ENCODE measurements at regions of chr5 and their contacts with region 1.

Region 1: DNA sequence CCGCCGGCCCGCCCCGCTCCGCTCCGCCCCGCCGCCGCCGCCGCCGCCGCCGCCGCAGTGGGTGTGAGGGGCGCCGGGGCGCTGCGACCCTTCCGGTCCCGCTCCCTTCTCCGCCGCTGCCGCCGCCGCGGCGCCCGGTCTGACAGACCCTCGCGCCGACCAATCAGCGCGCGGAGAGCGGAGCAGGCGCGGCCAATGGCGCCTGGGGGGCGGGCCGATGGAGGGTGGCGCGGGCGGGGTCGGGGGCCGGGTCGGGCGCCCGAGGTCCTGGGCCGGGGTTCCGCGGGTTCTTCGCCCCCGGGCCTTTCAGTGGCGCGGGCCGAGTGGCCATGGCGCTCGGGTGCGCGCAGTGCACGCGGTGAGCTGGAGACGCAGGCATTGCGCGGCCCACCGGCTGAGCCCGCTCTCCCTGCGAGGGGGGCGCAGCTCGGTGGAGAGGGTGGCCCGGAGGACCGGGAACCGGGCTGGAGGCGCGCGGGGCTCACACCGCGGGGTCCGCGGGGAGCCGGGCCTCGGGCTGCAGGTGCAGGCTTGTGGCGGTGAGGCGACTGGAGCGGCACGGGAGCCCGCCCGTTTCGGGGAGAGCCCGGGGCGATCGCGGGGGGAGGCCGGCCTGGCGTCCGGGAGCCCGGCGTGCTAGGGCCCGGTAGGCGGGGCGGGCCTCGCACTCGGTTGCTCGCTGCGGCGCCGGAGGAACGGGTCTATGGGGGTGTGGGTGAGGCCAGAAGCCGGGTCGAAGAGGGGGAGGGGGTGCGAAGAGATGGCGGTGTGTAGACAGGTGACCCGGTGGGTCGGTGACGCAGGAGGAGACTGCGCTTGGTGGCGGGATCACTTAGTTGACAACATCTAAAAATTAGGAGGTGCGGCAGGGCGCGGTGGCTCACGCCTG is at the start of gene MAPK9:
- DNase-seq: peak; percentile 43
- ATAC-seq: peak; percentile 81
- H3K4me3 ChIP-seq: peak within 1 kb of the TSS; percentile 71 to 79
- H3K27ac ChIP-seq: peak within 1 kb of the TSS; percentile 93
- H3K4me1 ChIP-seq: peaks cover 10 to 24% of the 10 kb centered on the region in 2 experiments
- H3K27me3 ChIP-seq: no peaks in the 10 kb centered on the region
- CTCF ChIP-seq: no peak
- POLR2A ChIP-seq: peak; percentile 45
- RAD21 ChIP-seq: no peak
- total RNA-seq, gene MAPK9: 43.4 TPM

Region 2: GRCh38 chr5:180315762-180316212 is 23.6 kb after region 1 on chr5:
- CTCF ChIA-PET with region 1: interaction called, 28 read pairs
- POLR2A ChIA-PET with region 1: no interaction called
- RAD21 ChIA-PET with region 1: interaction called in 1 of 2 experiments, 7 read pairs
- intact Hi-C with region 1: loop called (anchors 1 kb)
- DNase-seq: peak; percentile 19
- ATAC-seq: peak; percentile 87
- H3K4me3 ChIP-seq: no peak overlapping the region
- H3K27ac ChIP-seq: no peak overlapping the region
- H3K4me1 ChIP-seq: no peaks in the 10 kb centered on the region
- H3K27me3 ChIP-seq: no peaks in the 10 kb centered on the region
- CTCF ChIP-seq: peak; percentile 89 to 100 (median 98)
- POLR2A ChIP-seq: no peak
- RAD21 ChIP-seq: peak; percentile 65

Region 3: GRCh38 chr5:180328296-180329137 is 36.3 kb after region 1 on chr5:
- CTCF ChIA-PET with region 1: interaction called, 28 read pairs
- POLR2A ChIA-PET with region 1: interaction called, 5 read pairs
- RAD21 ChIA-PET with region 1: interaction called, 5 to 7 read pairs
- intact Hi-C with region 1: loop called (anchors 1 kb)
- DNase-seq: peak; percentile 74
- ATAC-seq: peak; percentile 90
- H3K4me3 ChIP-seq: no peak overlapping the region
- H3K27ac ChIP-seq: no peak overlapping the region
- H3K4me1 ChIP-seq: peaks cover 33 to 45% of the 10 kb centered on the region in 2 experiments
- H3K27me3 ChIP-seq: no peaks in the 10 kb centered on the region
- CTCF ChIP-seq: peak; percentile 84 to 94 (median 90)
- POLR2A ChIP-seq: no peak
- RAD21 ChIP-seq: peak; percentile 73

Region 4: GRCh38 chr5:180470966-180471582 is 178.9 kb after region 1 on chr5:
- CTCF ChIA-PET with region 1: interaction called, 25 read pairs
- POLR2A ChIA-PET with region 1: no interaction called
- RAD21 ChIA-PET with region 1: interaction called, 3 to 6 read pairs
- intact Hi-C with region 1: loop called (anchors 1 kb)
- DNase-seq: peak; percentile 32
- ATAC-seq: peak; percentile 85
- H3K4me3 ChIP-seq: no peak overlapping the region
- H3K27ac ChIP-seq: no peak overlapping the region
- H3K4me1 ChIP-seq: peaks cover 7 to 14% of the 10 kb centered on the region in 2 experiments; a peak in 3 of 4 replicates
- H3K27me3 ChIP-seq: no peaks in the 10 kb centered on the region
- CTCF ChIP-seq: peak; percentile 83 to 96 (median 95)
- POLR2A ChIP-seq: no peak
- RAD21 ChIP-seq: peak; percentile 93

Region 5: GRCh38 chr5:180605554-180606214 is 313.5 kb after region 1 on chr5:
- CTCF ChIA-PET with region 1: interaction called, 5 read pairs
- POLR2A ChIA-PET with region 1: no interaction called
- RAD21 ChIA-PET with region 1: no interaction called
- intact Hi-C with region 1: loop called (anchors 1 kb)
- DNase-seq: peak; percentile 75
- ATAC-seq: peak; percentile 81
- H3K4me3 ChIP-seq: no peak overlapping the region
- H3K27ac ChIP-seq: no peak overlapping the region
- H3K4me1 ChIP-seq: 0 out of 4 replicates have a peak, but pooled peaks cover 0 to 3% of the 10 kb centered on the region in 2 experiments
- H3K27me3 ChIP-seq: no peaks in the 10 kb centered on the region
- CTCF ChIP-seq: peak; percentile 77 to 91 (median 85)
- POLR2A ChIP-seq: no peak
- RAD21 ChIP-seq: peak; percentile 73

Region 6: DNA sequence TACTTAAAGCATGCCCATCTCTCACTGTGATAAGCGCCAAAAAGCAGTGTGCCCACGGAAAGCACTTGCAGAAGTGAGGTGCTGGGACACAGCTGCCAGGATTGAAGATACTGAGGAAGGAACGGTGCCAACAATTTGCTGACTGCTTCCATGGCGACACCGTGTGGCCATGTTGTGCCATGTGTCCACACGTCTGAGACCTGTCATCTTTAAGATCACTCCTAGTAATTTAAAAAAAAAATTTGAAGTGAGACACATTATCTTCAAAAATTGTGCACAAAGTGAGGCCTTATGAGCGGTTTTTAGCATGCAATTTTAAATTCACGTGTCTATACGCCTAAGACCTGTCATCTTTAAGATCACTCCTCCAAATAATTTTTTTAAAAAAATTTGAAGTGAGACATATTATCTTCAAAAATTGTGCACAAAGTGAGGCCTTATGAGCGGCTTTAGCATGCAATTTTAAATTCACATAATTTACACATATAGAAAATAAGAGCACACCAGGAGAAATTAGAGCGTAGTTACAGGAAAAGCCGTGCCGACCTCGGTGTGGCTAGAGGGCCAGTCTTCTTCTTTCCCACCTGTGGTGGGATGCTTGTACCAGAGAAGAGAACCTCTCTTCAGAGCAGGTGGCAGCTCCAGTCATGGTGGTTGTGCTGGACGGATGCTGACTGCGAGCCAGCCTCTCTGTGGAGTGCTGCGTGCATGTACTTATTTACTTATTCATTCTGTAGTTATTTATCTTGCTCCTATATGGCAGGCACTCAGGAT is 378.6 kb after region 1 on chr5:
- CTCF ChIA-PET with region 1: no interaction called
- POLR2A ChIA-PET with region 1: no interaction called
- RAD21 ChIA-PET with region 1: no interaction called
- intact Hi-C with region 1: loop called (anchors 2 kb)
- DNase-seq: peak; percentile 42
- ATAC-seq: peak; percentile 89
- H3K4me3 ChIP-seq: no peak overlapping the region
- H3K27ac ChIP-seq: no peak overlapping the region
- H3K4me1 ChIP-seq: peaks cover 0 to 3% of the 10 kb centered on the region in 2 experiments; a peak in 2 of 4 replicates
- H3K27me3 ChIP-seq: no peaks in the 10 kb centered on the region
- CTCF ChIP-seq: peak; percentile 70 to 82 (median 78)
- POLR2A ChIP-seq: no peak
- RAD21 ChIP-seq: peak; percentile 80

Region 7: DNA sequence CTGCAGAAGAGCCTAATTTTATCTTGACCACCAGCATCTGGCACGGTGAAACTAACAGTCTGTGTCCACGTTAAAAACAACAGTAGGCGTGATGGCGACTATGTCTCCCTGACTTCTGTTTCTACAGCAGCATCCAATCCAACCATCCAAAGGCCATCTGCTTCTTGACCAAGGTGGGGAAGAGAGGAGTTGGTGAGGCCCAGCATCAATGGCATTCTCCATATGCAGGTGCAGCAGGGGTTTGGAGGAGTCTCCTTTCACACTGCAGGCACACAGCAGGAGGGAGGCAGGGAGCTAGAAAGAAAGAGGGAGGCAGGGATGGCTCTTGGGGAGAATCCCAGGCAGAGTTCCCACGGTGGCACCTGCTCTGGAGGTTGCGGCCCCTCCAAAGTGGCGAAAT is 483.4 kb after region 1 on chr5:
- CTCF ChIA-PET with region 1: no interaction called
- POLR2A ChIA-PET with region 1: no interaction called
- RAD21 ChIA-PET with region 1: no interaction called
- intact Hi-C with region 1: no loop called
- DNase-seq: no peak
- ATAC-seq: no peak
- H3K4me3 ChIP-seq: no peak overlapping the region
- H3K27ac ChIP-seq: no peak overlapping the region
- H3K4me1 ChIP-seq: no peaks in the 10 kb centered on the region
- H3K27me3 ChIP-seq: no peaks in the 10 kb centered on the region
- CTCF ChIP-seq: no peak
- POLR2A ChIP-seq: no peak
- RAD21 ChIP-seq: no peak

Measured in HCT116 (cell line).